Thyroid gland (tissue), 4 donors: ENCODE measurements at regions of chr1 and their contacts with region 1.

Region 1: DNA sequence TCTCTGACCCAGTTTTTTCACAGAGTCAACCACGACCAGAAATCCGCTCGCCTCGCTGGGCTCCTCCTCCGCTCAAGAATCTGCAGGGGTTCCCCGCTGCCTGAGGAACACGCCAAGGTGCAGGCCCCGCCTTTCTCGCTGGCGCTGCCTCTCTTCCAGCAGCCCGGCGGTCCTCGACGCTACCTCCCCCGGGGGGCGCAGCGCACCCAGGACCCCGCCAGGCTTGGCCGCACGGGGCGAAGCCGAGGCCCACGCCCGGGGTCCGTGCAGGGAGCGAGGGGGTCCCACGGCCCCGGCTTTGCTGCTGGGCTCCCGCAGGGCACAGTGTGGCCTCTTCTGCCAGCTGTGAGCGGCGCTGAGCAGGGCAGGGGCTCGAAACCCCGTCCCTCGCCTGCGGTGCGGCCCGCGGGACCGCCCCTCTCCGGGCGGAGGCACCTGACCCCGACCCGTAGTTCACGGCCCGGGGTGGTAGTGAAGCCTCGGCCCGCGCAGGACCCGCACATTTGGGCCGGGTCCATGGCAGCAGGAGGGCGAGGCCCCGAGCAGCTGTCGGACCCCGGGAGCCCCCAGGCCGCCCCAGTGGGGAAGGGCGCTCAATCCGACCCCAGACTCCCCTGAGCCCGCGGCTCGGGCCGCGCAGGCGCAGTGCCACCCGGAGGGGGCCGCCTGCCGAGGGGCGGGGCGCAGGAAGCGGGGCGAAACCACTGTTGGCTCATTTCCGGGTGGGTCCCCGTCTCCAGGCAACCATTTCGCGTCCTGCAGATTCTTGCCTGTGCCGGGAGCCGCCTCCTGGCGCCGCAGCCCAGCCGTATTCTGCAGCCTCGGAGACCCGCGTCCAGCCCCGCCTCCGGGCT is 10.0 kb upstream of the MMEL1 start:
- DNase-seq: peak; percentile 94
- H3K4me3 ChIP-seq: peak overlapping the region; percentile 69 to 99 (median 93)
- H3K27ac ChIP-seq: peak overlapping the region; percentile 72 to 88 (median 78)
- H3K4me1 ChIP-seq: peaks cover 14 to 18% of the 10 kb centered on the region in 2 donors
- H3K27me3 ChIP-seq: no peaks in the 10 kb centered on the region
- CTCF ChIP-seq: peak in 3 of 6 experiments; percentile 4 to 31 (median 30)
- POLR2A ChIP-seq: peak in 1 of 2 donors; percentile 92

Region 2: GRCh38 chr1:2414083-2414958 is 228.5 kb before region 1 on chr1:
- intact Hi-C with region 1: loop called (anchors 5 kb)
- DNase-seq: peak; percentile 68 to 74
- H3K4me3 ChIP-seq: no peak overlapping the region
- H3K27ac ChIP-seq: no peak overlapping the region
- H3K4me1 ChIP-seq: peaks cover 18 to 39% of the 10 kb centered on the region in 2 donors
- H3K27me3 ChIP-seq: no peaks in the 10 kb centered on the region
- CTCF ChIP-seq: peak; percentile 81 to 95 (median 92)
- POLR2A ChIP-seq: no peak

Region 3: GRCh38 chr1:2525920-2526823 is 116.6 kb before region 1 on chr1 and contains the start of gene PANK4:
- intact Hi-C with region 1: loop called (anchors 10 kb)
- DNase-seq: peak; percentile 95 to 96
- H3K4me3 ChIP-seq: peak within 1 kb of the TSS; percentile 72 to 98 (median 85)
- H3K27ac ChIP-seq: peak within 1 kb of the TSS in 2 of 3 donors; percentile 62 to 79
- H3K4me1 ChIP-seq: peaks cover 28 to 54% of the 10 kb centered on the region in 2 donors
- H3K27me3 ChIP-seq: no peaks in the 10 kb centered on the region
- CTCF ChIP-seq: peak in 3 of 6 experiments; percentile 12 to 46 (median 36)
- POLR2A ChIP-seq: peak in 1 of 2 donors; percentile 73
- total RNA-seq, gene PANK4: 29.3 to 39.9 (median 38.0) TPM

Region 4: GRCh38 chr1:3261007-3261968 is 618.5 kb after region 1 on chr1:
- intact Hi-C with region 1: no loop called
- DNase-seq: no peak
- H3K4me3 ChIP-seq: no peak overlapping the region
- H3K27ac ChIP-seq: no peak overlapping the region
- H3K4me1 ChIP-seq: no peaks in the 10 kb centered on the region
- H3K27me3 ChIP-seq: no peaks in the 10 kb centered on the region
- CTCF ChIP-seq: no peak
- POLR2A ChIP-seq: no peak